ENCODE measurements at regions of chr17 and their contacts with region 1.

Region 1: DNA sequence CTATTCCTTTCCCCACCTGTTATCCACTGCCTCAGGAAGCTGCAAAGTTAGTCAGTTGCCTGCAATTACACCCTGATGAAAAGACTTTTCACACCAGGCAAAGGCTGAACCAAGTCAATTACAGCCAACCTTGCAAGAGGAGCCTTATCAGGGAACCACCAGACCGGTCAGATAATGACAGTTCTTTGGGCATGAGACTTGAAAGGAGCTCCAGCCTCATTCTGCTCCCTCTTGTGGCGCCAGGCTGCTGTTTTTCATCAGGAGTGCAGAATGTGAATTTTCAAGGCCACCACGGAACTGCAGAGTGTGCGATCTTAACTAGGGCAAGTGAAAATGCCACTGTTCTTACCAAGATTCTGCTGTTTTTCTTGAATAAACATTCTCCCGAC is 22.5 kb downstream of the DNAI2 start:
- DNase-seq: no peak

Region 2: DNA sequence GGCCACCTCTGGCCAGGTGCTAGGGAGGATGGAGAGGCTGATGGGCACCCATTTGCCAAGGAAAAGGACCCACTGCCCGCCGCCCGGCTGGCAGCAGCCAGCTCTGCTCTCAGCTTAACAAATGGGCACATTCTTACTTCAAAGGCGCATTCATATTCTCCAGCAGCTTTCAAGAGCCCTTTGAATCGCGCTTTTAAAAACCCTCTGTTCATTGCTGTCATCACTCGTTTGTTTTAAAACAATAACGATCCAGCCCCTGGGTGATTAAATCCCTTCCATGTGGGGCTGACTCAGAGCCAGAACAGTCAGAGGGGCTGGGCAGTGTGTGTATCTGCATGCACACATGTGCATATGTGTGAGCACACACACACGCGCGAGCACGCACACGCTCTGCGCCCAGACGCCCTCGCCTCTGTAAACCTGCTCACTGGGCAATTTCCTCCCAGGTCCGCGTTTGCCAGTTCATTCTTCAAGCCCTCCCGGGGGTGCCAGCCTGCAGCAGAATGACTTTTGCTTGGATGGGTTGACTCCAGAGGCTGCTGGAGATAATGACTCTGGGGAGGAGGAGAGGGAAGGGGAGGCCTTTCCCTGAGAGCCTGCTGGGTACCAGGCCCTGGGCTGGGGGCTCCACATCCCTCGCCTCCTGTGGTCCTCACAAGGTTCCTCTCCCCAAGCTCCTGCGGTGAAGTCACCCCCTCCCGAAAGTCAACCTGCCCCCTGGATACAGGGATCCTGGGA is 785.4 kb before region 1 on chr17:
- intact Hi-C with region 1: loop called in 1 of 2 experiments (anchors 5 kb)
- DNase-seq: no peak

Region 3: DNA sequence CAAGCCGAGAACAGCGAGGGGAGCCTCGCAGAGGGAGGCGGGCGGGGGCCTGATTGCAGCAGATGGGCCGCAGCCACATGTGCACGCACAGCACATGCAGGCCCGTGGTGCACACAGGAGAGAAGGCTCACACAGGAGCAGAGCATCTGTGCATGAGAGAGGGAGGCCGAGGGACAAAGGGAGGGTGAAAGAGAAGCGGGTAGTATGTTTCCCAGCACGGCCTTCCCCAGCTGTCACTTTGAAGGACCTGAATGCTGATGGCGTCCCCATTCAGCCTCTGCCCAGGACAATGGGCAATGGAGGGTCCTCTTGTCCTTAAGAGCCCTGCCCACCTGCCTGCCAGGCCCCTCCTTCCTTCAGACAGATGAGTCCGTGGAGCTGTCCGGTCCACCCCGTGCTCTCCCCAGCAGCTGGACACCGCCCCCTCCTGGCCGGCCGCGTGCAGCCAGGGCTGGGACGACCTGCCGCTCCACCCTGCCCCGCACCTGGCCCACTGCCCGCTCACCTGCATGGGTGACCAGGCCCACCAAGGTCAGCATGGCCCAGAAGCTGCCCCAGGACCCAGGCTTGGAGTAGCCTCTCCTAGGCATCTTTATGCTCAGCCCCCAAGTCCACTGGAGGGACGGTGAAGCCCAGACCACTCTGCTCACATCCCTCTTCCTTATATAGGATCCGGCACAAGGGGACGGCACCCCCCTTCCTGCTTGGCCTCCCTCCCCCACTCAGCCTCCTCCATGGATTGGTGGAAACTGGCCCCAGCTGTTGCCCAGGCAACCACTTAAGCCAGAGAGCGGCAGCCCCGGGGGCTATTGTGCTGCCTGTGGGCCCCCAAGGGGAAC is 64.9 kb after region 1 on chr17 and contains the start of gene BTBD17:
- intact Hi-C with region 1: no loop called
- DNase-seq: no peak
- total RNA-seq, gene BTBD17: not detected